GM12878 (cell line): ENCODE measurements at regions of chr16 and their contacts with region 1.

Region 1: DNA sequence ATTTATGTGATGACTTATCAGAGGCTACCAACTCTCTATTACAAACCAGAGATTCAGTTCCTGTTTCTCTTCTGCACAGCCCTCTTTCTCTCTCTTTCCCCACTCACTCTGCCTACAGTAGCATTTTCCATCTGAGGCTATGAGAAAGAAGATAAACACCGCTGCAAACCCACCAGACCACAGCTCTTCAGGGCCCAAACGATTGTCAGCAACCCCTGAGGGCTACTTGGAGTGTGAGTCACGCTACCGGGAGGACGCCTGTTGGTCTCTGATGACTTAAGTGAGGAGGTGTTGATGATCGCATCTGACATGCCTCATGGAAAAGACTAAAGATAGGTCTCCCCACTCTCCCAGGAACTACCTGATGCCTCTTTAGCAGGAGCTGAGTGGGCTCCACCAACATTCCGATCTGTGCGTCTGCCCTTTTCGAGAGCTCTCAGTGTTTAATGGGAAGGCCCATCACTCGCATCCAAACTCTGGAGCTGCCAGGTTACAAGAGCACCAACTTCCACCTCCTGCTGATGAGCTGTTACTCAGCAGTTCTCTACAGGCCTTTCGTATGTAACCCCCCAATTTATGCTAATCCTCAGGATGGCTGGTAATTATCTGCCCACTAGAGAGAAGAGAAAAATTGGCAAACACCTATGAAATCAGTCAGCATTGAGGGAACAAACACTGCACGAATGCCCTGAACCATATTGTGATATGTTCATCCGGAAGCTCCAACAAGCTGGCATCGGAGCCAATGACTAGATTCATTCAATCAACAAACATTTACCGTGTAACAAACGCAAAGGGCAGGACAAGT is 9.2 kb downstream of the GRIN2A start:
- DNase-seq: peak; percentile 4
- ATAC-seq: peak; percentile 91
- H3K4me3 ChIP-seq: no peak overlapping the region
- H3K27ac ChIP-seq: no peak overlapping the region
- H3K4me1 ChIP-seq: no peaks in the 10 kb centered on the region
- H3K27me3 ChIP-seq: no peaks in the 10 kb centered on the region; a peak in 1 of 4 replicates
- CTCF ChIP-seq: no peak
- EP300 ChIP-seq: no peak
- POLR2A ChIP-seq: no peak
- RAD21 ChIP-seq: no peak

Region 2: DNA sequence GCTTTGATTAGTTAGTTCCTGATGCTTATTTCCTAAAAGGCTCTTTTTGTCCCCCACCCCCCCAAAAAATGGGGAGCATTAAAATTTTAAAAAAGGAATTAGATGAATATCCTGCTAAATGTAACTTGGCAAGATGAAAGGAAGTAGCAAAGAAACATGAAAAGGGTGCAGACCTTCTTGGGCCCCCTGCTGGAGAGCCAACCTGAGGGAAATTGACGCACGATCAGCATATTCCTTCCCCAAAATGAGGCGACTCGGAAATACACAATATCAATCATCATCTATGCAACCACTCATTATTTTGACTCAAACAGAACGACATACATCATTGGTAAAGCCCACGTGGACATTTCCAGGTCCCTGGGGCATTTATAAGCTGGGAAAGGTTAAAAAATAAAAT is 50.5 kb before region 1 on chr16:
- CTCF ChIA-PET with region 1: no interaction called
- POLR2A ChIA-PET with region 1: no interaction called
- RAD21 ChIA-PET with region 1: no interaction called
- SMC1A ChIA-PET with region 1: interaction called, 11 read pairs
- in situ Hi-C with region 1: no loop called
- intact Hi-C with region 1: no loop called
- DNase-seq: no peak
- ATAC-seq: peak; percentile 21; the same call in 1 of the 3 replicates
- H3K4me3 ChIP-seq: no peak overlapping the region
- H3K27ac ChIP-seq: no peak overlapping the region
- H3K4me1 ChIP-seq: no peaks in the 10 kb centered on the region
- H3K27me3 ChIP-seq: no peaks in the 10 kb centered on the region
- CTCF ChIP-seq: peak; percentile 26 to 31 (median 27); a peak in 4 of 6 replicates
- EP300 ChIP-seq: no peak
- POLR2A ChIP-seq: no peak
- RAD21 ChIP-seq: peak; percentile 30

Region 3: GRCh38 chr16:10191096-10191495 is 18.0 kb after region 1 on chr16:
- CTCF ChIA-PET with region 1: no interaction called
- POLR2A ChIA-PET with region 1: no interaction called
- RAD21 ChIA-PET with region 1: no interaction called
- SMC1A ChIA-PET with region 1: no interaction called
- in situ Hi-C with region 1: no loop called
- intact Hi-C with region 1: no loop called
- DNase-seq: no peak
- ATAC-seq: no peak
- H3K4me3 ChIP-seq: no peak overlapping the region
- H3K27ac ChIP-seq: no peak overlapping the region
- H3K4me1 ChIP-seq: no peaks in the 10 kb centered on the region
- H3K27me3 ChIP-seq: no peaks in the 10 kb centered on the region
- CTCF ChIP-seq: no peak
- EP300 ChIP-seq: no peak
- POLR2A ChIP-seq: no peak
- RAD21 ChIP-seq: no peak

Region 4: DNA sequence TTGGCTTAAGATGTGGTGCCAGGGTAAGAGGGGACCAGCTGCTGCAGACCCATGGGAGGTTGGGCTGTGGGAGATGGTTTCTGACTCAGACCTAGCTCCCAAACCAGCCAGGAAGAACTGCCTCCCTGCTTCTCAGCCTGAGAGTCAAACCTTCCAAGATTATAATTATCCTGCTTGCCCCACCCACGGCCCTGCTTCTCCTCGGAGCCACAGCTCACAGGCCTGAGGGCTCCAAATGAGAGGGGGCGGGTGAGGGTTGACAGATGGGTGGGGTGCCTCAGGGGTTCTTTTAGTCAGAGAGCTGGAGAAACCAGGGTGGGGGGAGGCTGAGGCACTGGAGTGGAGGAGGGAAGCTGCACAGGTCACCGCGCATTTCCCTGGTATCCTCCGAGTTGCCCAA is 37.9 kb after region 1 on chr16:
- CTCF ChIA-PET with region 1: no interaction called
- POLR2A ChIA-PET with region 1: no interaction called
- RAD21 ChIA-PET with region 1: no interaction called
- SMC1A ChIA-PET with region 1: no interaction called
- in situ Hi-C with region 1: no loop called
- intact Hi-C with region 1: no loop called
- DNase-seq: no peak
- ATAC-seq: no peak
- H3K4me3 ChIP-seq: no peak overlapping the region
- H3K27ac ChIP-seq: no peak overlapping the region
- H3K4me1 ChIP-seq: peaks cover 6% of the 10 kb centered on the region
- H3K27me3 ChIP-seq: peaks cover 0 to 1% of the 10 kb centered on the region in 2 experiments; a peak in 1 of 4 replicates
- CTCF ChIP-seq: no peak
- EP300 ChIP-seq: no peak
- POLR2A ChIP-seq: no peak
- RAD21 ChIP-seq: no peak

Region 5: DNA sequence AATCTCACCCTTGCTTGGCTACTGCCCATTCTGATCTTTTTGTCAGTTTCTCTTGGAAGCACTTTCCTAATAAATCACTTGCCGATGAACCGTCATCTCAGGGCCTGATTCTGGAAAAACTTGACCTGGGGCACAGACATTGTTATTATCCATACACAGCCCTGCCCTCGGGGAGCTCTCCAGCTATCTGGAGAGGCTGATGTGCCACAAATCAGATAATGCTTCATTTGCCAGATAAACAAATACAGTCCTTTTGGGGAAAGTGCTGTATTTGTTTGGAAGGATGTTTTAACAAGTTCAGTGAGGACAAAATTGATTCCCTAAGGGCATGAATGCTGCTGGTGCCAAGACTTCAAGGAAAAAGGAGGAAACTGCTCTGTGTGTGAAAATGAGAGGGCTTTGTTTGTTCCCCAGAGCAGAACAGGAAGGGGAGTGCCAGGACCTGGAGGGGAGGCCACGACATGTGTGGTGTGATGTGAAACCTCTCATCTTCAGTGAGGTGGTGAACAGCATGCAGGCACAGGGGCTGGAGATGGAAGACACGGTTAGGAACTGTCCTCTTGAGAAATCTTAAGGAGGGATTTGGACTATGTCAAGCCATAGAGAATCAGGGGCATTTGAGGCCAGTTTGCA is 55.6 kb after region 1 on chr16:
- CTCF ChIA-PET with region 1: no interaction called
- POLR2A ChIA-PET with region 1: no interaction called
- RAD21 ChIA-PET with region 1: no interaction called
- SMC1A ChIA-PET with region 1: no interaction called
- in situ Hi-C with region 1: no loop called
- intact Hi-C with region 1: no loop called
- DNase-seq: peak; percentile 28
- ATAC-seq: peak; percentile 94
- H3K4me3 ChIP-seq: no peak overlapping the region
- H3K27ac ChIP-seq: no peak overlapping the region
- H3K4me1 ChIP-seq: peaks cover 6% of the 10 kb centered on the region
- H3K27me3 ChIP-seq: no peaks in the 10 kb centered on the region; a peak in 1 of 4 replicates
- CTCF ChIP-seq: no peak
- EP300 ChIP-seq: no peak
- POLR2A ChIP-seq: no peak
- RAD21 ChIP-seq: no peak

Region 6: DNA sequence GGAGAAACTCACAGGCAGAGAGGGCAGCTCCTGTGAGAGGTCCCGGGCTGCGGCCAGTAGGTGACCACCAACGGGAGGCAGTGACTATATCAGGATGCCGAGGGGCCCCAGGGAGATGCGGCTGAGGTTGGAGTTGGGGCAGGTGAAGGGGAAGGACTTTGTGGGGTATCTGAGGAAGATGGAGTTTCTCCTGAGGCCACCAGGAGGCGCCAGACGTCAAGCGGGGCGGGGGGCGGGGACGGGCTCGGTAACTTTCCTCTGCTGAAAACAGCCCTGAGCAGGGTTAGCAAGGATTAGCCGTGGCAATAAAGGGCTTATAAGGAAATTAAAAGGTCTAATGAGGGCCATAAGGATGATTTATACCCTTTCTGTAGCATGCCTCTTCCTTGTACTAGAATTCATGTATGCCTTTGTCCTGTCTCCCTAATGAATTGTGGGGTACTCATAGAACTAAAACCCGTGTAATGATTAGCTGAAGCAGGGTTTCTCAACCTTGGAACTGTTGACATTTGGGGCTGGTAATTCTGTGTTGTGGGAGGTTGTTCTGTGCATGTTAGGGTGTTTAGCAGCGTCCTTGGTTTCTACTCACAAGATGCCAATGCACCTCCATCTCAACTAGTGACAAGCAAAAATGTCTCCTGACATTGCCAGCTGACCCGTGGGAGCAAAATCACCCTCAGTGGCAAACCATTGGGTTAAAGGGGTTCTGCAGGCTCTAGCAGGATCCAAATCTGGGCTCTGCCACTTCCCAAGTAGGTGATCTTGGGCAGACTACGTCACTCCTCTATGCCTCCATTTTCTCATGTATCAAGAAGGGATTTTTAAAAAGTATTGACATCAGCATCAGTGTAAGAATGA is 84.0 kb after region 1 on chr16:
- CTCF ChIA-PET with region 1: no interaction called
- POLR2A ChIA-PET with region 1: no interaction called
- RAD21 ChIA-PET with region 1: no interaction called
- SMC1A ChIA-PET with region 1: no interaction called
- in situ Hi-C with region 1: no loop called
- intact Hi-C with region 1: no loop called
- DNase-seq: peak; percentile 49
- ATAC-seq: peak; percentile 89
- H3K4me3 ChIP-seq: no peak overlapping the region
- H3K27ac ChIP-seq: 0 out of 2 replicates have a peak overlapping the region, but pooled peaks have one; percentile 42
- H3K4me1 ChIP-seq: peaks cover 19% of the 10 kb centered on the region
- H3K27me3 ChIP-seq: no peaks in the 10 kb centered on the region
- CTCF ChIP-seq: peak; percentile 89 to 96 (median 92)
- EP300 ChIP-seq: peak; percentile 17 to 40; a peak in 1 of 4 replicates
- POLR2A ChIP-seq: no peak
- RAD21 ChIP-seq: peak; percentile 90